MCF 10A (cell line): ENCODE measurements at regions of chr11 and their contacts with region 1.

Region 1: DNA sequence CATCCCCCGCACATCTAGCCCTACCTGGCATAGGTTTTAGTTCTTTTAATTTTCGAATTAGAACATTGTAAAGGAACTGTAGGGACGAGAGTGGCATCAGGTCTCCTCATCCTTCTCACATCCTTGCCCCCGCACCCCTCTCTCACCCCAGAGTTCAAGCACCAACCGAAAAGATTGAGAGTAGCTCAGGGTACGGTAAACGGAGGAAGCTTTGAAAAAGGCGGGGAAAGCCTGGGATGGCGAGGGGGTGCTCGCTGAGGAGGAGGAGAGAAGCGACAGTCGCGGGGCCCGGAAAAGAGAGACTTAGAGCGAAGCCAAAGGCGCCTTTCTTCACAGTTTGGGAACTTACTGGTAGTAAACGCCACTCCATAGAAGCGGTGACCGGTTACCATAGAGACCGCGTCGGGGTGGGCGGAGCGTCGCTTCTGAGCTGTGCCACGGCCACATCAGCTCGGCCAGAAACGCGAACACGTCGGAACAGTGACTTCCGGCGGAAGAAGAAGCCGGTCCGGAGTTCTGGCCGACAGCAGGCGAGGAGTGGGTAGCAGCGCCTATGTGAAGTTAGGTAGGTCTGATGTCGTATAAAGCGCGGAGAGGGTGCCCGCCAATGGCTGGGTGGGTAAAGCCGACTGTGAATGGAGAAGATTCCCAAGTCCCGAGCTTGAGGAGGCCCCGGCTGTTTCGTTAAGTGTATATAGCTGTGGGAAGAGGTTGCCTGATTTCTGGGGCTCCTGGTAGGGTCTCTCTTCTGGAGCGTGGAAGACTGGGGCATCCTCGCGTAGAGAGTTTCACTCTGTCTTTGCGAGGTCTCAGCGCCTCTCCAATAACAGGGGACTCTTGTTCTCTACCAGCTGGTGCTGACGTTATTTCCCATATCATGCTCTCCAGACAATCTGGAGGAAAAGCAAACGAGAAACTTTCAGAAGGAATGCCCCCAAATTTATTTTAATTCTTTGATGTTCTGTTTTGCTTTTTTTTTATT is at the starts of genes DCDC1 and DNAJC24:
- DNase-seq: peak; percentile 89
- H3K4me3 Mint-ChIP-seq: peak within 1 kb of the TSS; percentile 85
- H3K27ac Mint-ChIP-seq: peak within 1 kb of the TSS; percentile 92
- H3K4me1 Mint-ChIP-seq: no peaks in the 10 kb centered on the region
- H3K27me3 Mint-ChIP-seq: peaks cover 32% of the 10 kb centered on the region
- CTCF ChIP-seq: no peak
- total RNA-seq, gene DCDC1: 0.19 TPM in 1 of 2 replicates, not detected in the other
- total RNA-seq, gene DNAJC24: 19.0 and 23.7 TPM in 2 replicates

Region 2: DNA sequence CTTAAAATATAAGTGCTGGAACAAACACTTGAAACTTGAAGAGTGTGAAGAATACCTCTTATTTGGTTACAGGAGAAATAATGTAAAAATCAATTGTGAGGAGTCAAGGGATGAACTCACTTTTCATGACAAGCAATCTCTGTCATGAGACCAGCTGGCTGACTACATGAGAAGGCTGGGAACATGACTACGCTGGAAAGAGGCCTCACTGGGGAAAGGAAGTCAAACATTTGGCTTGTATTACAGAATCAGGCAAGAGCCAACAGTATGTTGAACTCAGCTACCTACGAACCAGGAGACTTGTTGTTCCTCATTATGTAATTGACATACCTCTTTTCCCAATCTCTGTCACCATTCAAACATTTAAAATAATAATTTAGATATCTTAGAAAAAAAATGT is 14.5 kb before region 1 on chr11:
- CTCF ChIA-PET with region 1: no interaction called
- POLR2A ChIA-PET with region 1: interaction called, 11 read pairs
- intact Hi-C with region 1: no loop called
- DNase-seq: peak; percentile 9
- H3K4me3 Mint-ChIP-seq: no peak overlapping the region
- H3K27ac Mint-ChIP-seq: no peak overlapping the region
- H3K4me1 Mint-ChIP-seq: peaks cover 4% of the 10 kb centered on the region
- H3K27me3 Mint-ChIP-seq: no peaks in the 10 kb centered on the region
- CTCF ChIP-seq: no peak

Region 3: GRCh38 chr11:31714840-31715239 is 345.2 kb after region 1 on chr11:
- CTCF ChIA-PET with region 1: no interaction called
- POLR2A ChIA-PET with region 1: no interaction called
- intact Hi-C with region 1: no loop called
- DNase-seq: no peak
- H3K4me3 Mint-ChIP-seq: no peak overlapping the region
- H3K27ac Mint-ChIP-seq: no peak overlapping the region
- H3K4me1 Mint-ChIP-seq: no peaks in the 10 kb centered on the region
- H3K27me3 Mint-ChIP-seq: no peaks in the 10 kb centered on the region
- CTCF ChIP-seq: no peak